Activated CD4-positive, alpha-beta memory T cell treated with anti-CD3 and anti-CD28 coated beads for 36 hours (primary cell): ENCODE measurements at regions of chr17 and their contacts with region 1.

Region 1: GRCh38 chr17:78497115-78497540 is 80.1 kb downstream of the DNAH17 start:
- DNase-seq: peak; percentile 72
- H3K4me3 Mint-ChIP-seq: no peak overlapping the region
- H3K27ac Mint-ChIP-seq: no peak overlapping the region
- H3K4me1 Mint-ChIP-seq: no peaks in the 10 kb centered on the region
- H3K27me3 Mint-ChIP-seq: no peaks in the 10 kb centered on the region

Region 2: DNA sequence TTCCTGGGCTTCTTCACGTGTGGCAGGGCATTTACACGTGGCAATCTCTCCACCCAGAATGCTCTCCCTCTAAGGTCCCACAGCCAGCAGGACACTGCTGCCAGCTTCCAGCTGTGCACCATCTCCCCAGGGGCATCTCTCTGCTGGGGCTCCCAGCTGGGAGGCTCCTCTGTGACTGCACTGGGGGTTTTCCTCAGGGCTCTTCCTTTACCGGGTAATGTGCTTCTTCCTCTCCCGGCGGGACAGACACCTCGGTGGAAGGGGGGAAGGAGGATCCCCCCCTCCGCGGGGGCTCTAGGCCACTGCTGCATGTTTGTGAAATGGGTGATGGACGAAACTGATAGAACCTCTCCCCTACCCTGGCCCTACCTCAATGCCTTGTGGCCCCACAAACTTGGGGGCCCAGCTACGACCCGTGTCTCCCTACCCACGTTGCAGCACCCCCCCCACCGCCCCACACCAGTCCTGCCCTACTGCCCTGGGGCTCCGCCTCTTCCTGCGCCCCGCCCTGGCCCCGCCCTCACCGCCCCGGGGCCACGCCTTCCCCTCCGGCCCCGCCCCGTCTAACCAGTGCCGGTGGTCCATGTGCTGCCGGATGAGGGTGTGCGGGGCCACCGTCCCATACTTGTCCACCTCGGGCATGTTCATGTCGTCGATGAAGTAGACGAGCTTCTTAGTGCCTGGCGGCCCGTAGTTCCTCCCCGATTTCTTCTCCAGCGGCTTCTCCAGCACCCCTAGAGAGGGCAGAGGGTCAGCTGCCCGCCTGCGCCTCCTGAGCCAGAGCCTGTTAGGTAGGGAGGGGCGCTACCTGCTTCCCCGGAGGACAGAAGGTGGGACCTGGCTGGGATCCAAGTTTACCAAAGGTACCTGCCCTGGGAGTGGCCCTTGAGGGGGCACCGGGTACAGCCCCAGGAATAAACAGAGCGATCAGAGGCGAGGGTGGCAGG is 12.6 kb before region 1 on chr17:
- CTCF ChIA-PET with region 1: interaction called, 11 read pairs
- POLR2A ChIA-PET with region 1: no interaction called
- intact Hi-C with region 1: no loop called
- DNase-seq: peak; percentile 81
- H3K4me3 Mint-ChIP-seq: peak overlapping the region; percentile 71
- H3K27ac Mint-ChIP-seq: no peak overlapping the region
- H3K4me1 Mint-ChIP-seq: peaks cover 5% of the 10 kb centered on the region
- H3K27me3 Mint-ChIP-seq: peaks cover 4% of the 10 kb centered on the region

Region 3: DNA sequence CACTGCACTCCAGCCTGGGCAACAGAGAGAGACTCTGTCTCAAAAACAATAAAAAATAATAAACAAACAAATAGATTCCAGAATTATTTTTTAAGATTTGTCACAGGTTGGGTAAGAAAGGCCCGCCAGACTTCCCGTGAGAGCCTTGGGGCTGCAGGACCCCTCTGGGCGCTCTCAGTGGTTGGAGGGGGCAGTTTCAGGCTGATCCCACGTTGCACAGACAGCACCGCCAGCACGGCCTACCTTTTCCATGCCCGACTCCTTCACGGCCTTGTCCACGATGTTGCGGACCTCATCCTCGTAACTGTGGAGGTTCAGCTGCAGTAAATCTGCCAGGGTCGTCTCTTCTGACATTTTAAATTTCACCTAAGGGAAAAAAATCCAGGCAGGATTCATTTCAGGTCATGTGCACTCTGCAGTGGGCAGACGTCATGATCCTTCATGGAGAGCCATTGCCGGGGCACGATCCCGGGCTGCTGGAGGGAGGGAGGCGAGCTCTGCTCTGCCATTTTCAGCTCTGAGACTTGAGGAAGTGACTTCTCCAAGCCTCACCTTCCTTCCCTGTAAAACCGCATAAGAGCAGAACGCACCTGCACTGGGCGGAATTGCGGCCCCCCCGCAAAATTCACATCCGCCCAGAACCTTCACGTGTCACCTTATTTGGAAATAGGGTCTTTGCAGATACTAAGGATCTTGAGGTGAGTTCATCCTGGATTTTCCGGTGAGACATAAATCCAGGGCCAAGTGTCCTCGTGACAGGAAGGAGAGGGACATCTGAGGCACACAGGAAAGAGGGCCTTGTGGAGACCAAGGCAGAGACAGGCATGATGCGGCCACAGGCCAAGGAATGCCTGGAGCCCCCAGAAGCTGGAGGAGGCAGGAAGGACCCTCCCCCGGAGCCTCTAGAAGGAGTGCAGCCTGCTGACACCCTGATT is 13.3 kb after region 1 on chr17:
- CTCF ChIA-PET with region 1: no interaction called
- POLR2A ChIA-PET with region 1: no interaction called
- intact Hi-C with region 1: no loop called
- DNase-seq: no peak
- H3K4me3 Mint-ChIP-seq: no peak overlapping the region
- H3K27ac Mint-ChIP-seq: no peak overlapping the region
- H3K4me1 Mint-ChIP-seq: no peaks in the 10 kb centered on the region
- H3K27me3 Mint-ChIP-seq: no peaks in the 10 kb centered on the region

Region 4: GRCh38 chr17:78532922-78533640 is 36.0 kb after region 1 on chr17:
- CTCF ChIA-PET with region 1: no interaction called
- POLR2A ChIA-PET with region 1: no interaction called
- intact Hi-C with region 1: no loop called
- DNase-seq: peak; percentile 48
- H3K4me3 Mint-ChIP-seq: no peak overlapping the region
- H3K27ac Mint-ChIP-seq: no peak overlapping the region
- H3K4me1 Mint-ChIP-seq: peaks cover 29% of the 10 kb centered on the region
- H3K27me3 Mint-ChIP-seq: no peaks in the 10 kb centered on the region

Region 5: DNA sequence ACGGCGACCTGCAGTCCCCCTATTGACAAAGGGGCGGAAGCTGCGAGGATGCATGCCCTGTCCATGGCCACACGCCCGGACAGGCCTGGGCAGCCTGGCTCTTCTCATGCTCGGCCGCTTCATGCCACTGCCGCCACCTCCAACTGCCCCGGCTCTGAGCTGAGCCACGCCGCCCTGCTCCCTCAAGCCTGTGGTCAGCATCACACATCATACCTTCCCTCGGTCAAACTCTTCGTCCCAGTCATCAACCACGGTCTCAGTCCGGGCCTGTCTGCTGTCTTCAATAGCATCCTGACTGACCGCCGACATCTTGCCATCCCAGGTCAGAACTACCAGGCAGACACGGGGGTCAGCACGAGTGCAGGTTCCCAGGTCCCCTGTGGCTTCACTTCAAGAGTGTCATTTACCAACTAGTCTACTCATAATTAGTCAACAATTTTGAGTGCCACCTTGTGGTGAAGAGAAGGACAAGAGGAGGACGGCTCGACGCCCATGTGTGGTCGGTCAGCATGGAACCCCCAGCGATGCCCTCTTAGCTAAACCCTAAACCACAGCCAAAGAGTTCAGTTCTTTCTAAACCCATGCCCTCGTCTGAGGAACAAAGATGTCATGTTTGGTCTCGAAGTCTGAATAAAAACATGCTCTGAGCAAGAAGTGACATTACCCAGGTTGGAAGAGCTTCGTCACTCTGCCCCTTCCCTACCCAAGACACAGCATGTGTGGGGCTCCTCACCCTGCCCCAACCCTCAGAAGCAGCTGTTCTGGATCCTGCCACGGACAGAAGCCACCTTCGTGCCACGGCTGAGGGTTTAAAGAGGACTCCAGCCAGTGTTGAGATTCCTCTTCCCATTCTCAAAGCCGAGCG is 301.8 kb after region 1 on chr17:
- CTCF ChIA-PET with region 1: interaction called, 5 read pairs
- POLR2A ChIA-PET with region 1: no interaction called
- intact Hi-C with region 1: loop called (anchors 1 kb)
- DNase-seq: peak; percentile 49
- H3K4me3 Mint-ChIP-seq: no peak overlapping the region
- H3K27ac Mint-ChIP-seq: peak overlapping the region; percentile 86
- H3K4me1 Mint-ChIP-seq: peaks cover 52% of the 10 kb centered on the region
- H3K27me3 Mint-ChIP-seq: no peaks in the 10 kb centered on the region